ENCODE measurements at regions of chr10 and their contacts with region 1.

Region 1: DNA sequence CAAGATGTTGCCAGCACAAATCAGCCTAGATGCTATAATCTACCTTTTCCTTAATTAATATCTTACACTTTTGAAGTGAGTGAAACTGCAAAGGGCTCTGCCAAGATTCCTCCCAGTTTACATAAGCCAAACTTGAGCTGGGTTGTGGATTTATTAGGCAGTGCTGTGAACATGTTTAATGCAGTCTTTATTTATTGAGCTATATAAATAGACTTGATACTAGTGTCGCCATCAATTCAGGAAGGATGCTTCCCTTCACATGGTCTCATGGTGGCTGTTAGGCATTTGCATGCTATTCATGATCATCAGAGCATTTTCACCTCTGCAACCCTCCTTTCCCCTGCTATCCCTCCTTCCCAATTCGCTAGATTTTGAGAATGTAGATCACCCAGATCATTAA is 40.2 kb downstream of the PLEKHS1 start:
- DNase-seq: no peak
- ATAC-seq: no peak
- H3K4me3 ChIP-seq: no peak overlapping the region
- H3K27ac ChIP-seq: no peak overlapping the region
- H3K4me1 ChIP-seq: no peaks in the 10 kb centered on the region
- H3K27me3 ChIP-seq: no peaks in the 10 kb centered on the region

Region 2: GRCh38 chr10:113093188-113094113 is 698.2 kb before region 1 on chr10:
- intact Hi-C with region 1: no loop called
- DNase-seq: no peak
- ATAC-seq: no peak
- H3K4me3 ChIP-seq: no peak overlapping the region
- H3K27ac ChIP-seq: no peak overlapping the region
- H3K4me1 ChIP-seq: peaks cover 9% of the 10 kb centered on the region
- H3K27me3 ChIP-seq: no peaks in the 10 kb centered on the region

Region 3: DNA sequence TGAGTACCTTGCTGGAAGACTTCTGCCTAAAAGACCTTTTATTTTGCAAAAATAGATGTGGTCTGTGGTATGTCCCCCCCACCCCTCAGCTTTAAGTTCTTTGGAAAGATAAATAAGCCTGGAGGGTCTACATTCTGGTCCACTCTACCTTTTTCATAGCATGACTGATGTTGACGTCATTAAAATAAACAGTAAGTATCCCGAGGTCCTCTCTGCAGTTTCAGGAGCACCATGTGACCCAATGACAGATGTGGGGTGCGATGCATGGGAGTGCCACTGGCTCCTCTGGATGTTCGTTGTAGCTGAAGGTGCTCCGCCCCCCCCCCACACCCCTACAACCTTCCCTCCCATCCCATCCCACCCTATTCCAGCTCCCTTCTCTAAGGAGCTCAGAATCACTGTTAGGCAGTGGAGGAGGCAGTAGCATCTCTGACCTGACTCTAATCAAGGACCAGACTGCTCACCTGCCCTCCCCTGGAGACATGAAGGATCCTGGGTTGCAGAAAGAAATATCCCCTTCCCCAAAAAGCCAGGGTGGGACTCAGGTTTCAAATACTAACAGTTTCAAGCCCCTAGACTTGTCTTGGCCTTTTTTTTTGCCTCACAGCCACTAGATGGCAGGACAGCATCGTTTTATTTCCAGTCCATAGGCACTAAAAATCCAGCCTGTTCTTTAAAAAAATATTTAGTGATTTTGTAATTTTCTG is 86.9 kb before region 1 on chr10:
- intact Hi-C with region 1: loop called in 1 of 4 experiments (anchors 10 kb)
- DNase-seq: no peak
- ATAC-seq: peak in 1 of 2 donors; percentile 37
- H3K4me3 ChIP-seq: no peak overlapping the region
- H3K27ac ChIP-seq: no peak overlapping the region
- H3K4me1 ChIP-seq: no peaks in the 10 kb centered on the region
- H3K27me3 ChIP-seq: no peaks in the 10 kb centered on the region

Region 4: GRCh38 chr10:114172216-114172615 is 380.5 kb after region 1 on chr10:
- intact Hi-C with region 1: no loop called
- DNase-seq: no peak
- ATAC-seq: no peak
- H3K4me3 ChIP-seq: peak overlapping the region; percentile 78
- H3K27ac ChIP-seq: no peak overlapping the region
- H3K4me1 ChIP-seq: no peaks in the 10 kb centered on the region
- H3K27me3 ChIP-seq: no peaks in the 10 kb centered on the region

Measured in right cardiac atrium (tissue), 5 donors.